HAP-1 (cell line): ENCODE measurements at regions of chrX and their contacts with region 1.

Region 1: DNA sequence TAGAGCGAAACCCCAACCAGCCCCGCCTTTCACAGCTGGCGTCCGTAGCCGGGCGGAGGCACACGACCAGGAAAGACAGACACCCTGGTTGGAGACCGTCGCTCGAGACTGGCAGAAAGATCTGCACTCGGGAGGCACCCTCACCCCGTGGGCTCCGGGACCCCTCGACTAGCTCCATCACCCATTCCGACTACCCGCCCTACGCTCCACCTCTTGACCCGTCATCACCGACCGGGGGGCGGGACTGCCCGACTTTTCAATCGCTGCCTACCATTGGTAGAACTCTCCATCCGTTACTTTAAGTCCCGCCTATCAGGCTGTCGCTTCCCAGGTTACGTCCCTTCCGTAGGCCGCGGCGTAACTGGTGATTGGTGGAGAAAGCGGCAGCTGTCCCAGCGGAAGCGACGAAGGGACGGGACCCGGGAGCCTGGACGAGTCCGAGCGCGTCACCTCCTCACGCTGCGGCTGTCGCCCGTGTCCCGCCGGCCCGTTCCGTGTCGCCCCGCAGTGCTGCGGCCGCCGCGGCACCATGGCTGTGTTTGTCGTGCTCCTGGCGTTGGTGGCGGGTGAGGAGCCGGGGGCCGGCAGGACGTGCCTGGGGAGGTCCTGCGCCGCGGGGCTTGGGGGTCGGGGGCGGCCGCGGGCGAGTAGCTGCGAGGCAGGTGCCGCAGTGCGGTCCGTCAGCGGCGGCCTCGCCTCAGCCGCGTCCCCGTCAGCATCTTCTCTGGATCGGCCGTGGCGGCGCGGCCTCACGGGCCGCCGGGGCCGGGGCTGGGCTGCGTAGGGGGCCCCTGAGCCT is at the start of gene ATP6AP2:
- DNase-seq: peak; percentile 97 to 98
- H3K4me3 ChIP-seq: peak within 1 kb of the TSS; percentile 76
- H3K4me1 ChIP-seq: peaks cover 6% of the 10 kb centered on the region
- H3K27me3 ChIP-seq: no peaks in the 10 kb centered on the region

Region 2: DNA sequence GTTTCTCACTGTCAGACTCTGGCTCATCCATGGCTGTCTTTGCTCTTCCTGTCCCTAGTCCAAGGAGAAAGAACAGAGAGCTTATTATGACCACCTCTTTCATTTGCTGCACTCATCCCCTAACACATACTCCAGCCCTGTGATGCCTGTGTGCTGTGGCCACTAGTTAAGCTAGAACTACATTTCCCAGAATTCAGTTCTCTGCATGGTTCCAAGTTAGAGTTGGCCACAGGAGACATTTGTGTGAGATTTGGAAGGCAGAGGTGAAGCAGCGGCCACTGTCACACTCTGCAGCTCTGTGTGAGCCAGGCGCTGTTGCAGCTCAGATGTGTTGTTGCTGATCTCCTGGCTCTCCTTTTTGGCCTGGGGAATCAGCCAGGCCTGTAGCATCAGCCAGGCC is 188.1 kb before region 1 on chrX:
- in situ Hi-C with region 1: no loop called
- DNase-seq: no peak
- H3K4me3 ChIP-seq: no peak overlapping the region
- H3K4me1 ChIP-seq: no peaks in the 10 kb centered on the region
- H3K27me3 ChIP-seq: no peaks in the 10 kb centered on the region

Region 3: DNA sequence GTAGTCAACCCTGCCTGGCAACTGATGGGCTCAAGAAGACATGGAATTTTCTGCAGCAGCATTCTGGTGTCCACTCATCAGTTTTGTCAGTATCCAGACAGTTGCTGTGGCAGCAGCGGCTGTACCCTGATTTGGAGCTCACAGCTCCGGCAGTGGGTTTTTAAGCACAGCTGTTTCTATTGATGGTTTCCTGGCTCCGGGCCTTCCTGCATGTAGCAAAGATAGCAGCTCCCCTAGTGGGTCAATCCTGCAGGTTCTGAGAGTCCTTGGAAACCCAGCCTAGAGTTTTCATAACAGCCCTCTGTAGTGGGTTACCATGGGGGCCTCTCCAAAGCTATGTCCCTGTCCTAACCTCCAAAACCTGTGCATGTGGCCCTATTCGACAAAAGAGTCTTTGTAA is 84.0 kb before region 1 on chrX:
- in situ Hi-C with region 1: loop called (anchors 25 kb)
- DNase-seq: peak; percentile 13 to 21
- H3K4me3 ChIP-seq: no peak overlapping the region
- H3K4me1 ChIP-seq: no peaks in the 10 kb centered on the region
- H3K27me3 ChIP-seq: no peaks in the 10 kb centered on the region; the same call in 1 of the 2 replicates

Region 4: DNA sequence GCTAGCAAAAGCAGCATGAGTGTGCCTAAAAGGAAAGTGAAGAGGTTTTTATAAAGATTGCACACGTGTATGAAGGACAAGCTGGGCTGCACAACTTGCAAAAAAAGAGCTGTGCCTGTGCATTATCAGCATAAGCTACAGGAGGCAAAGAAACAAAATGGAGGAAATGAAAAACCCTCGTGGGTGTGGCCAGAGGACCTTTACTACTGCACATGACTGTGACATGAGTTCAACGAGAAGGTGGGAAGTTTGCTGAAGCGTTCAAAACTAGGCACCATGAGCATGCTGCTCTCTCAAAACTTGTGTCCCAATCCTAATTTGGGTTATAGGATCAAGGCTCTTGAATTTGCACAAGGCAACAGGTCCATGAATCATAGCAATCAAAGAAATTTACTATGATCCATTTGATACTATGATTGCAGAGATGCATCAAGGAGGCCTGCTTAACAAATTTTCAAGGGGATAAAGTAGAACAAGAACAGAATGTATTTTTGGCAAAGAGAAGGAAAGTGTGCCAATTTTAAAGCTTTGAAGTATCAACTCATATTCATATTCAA is 104.7 kb after region 1 on chrX:
- in situ Hi-C with region 1: no loop called
- DNase-seq: no peak
- H3K4me3 ChIP-seq: no peak overlapping the region
- H3K4me1 ChIP-seq: no peaks in the 10 kb centered on the region
- H3K27me3 ChIP-seq: no peaks in the 10 kb centered on the region